ENCODE measurements at regions of chr14 and their contacts with region 1.

Region 1: GRCh38 chr14:67487937-67488893 is at the start of gene TMEM229B:
- DNase-seq: peak; percentile 80
- H3K4me3 Mint-ChIP-seq: peak within 1 kb of the TSS; percentile 82
- H3K27ac Mint-ChIP-seq: peak within 1 kb of the TSS; percentile 81
- H3K4me1 Mint-ChIP-seq: peaks cover 44% of the 10 kb centered on the region
- H3K27me3 Mint-ChIP-seq: peaks cover 13% of the 10 kb centered on the region
- total RNA-seq, gene TMEM229B: 1.7 and 1.8 TPM in 2 replicates

Region 2: GRCh38 chr14:67426983-67427606 is 61.1 kb before region 1 on chr14:
- intact Hi-C with region 1: no loop called
- DNase-seq: peak; percentile 61
- H3K4me3 Mint-ChIP-seq: no peak overlapping the region
- H3K27ac Mint-ChIP-seq: no peak overlapping the region
- H3K4me1 Mint-ChIP-seq: peaks cover 7% of the 10 kb centered on the region
- H3K27me3 Mint-ChIP-seq: peaks cover 27% of the 10 kb centered on the region

Region 3: GRCh38 chr14:67461341-67462098 is 26.7 kb before region 1 on chr14:
- intact Hi-C with region 1: loop called (anchors 2 kb)
- DNase-seq: no peak
- H3K4me3 Mint-ChIP-seq: no peak overlapping the region
- H3K27ac Mint-ChIP-seq: no peak overlapping the region
- H3K4me1 Mint-ChIP-seq: peaks cover 17% of the 10 kb centered on the region
- H3K27me3 Mint-ChIP-seq: peaks cover 25% of the 10 kb centered on the region

Region 4: DNA sequence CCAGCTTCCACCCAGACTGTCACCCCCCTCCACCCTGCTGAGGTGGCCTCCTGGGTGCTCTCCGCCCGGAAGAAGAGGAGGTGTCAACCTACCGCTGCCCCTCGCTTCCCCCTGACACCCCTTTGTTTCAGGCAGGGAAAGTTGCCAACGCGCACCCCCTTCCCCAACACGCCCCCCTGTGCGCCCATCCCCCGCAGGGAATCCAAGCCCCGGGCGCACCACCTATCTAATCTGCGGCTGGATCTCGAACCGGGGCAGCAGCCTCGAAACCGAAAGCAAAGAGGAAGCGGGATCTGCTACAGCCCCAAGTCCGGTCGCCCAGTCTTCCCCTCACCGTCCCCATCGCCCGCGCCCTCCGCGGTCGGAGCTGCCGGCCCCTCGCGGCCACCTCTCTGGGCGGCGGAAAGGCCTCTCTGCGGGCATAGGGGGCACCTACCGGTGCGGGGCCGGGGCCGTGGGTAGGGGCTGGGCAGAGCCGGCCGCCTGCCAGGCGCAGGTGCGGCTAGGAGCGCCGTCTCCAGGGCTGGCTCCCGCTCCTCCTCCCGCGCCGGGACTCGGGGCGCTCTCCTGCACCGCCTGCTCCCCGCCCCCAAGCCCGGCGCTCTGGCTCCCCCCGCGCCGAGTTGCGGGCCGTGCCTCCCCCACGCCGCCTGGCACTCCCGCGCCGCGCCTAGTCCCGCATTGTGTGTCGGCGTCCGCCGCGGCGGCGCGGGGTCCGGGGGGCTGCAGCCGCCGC is 26.6 kb after region 1 on chr14:
- intact Hi-C with region 1: loop called (anchors 1 kb)
- DNase-seq: peak; percentile 39
- H3K4me3 Mint-ChIP-seq: peak overlapping the region; percentile 82
- H3K27ac Mint-ChIP-seq: peak overlapping the region; percentile 36
- H3K4me1 Mint-ChIP-seq: peaks cover 9% of the 10 kb centered on the region
- H3K27me3 Mint-ChIP-seq: peaks cover 46% of the 10 kb centered on the region

Region 5: DNA sequence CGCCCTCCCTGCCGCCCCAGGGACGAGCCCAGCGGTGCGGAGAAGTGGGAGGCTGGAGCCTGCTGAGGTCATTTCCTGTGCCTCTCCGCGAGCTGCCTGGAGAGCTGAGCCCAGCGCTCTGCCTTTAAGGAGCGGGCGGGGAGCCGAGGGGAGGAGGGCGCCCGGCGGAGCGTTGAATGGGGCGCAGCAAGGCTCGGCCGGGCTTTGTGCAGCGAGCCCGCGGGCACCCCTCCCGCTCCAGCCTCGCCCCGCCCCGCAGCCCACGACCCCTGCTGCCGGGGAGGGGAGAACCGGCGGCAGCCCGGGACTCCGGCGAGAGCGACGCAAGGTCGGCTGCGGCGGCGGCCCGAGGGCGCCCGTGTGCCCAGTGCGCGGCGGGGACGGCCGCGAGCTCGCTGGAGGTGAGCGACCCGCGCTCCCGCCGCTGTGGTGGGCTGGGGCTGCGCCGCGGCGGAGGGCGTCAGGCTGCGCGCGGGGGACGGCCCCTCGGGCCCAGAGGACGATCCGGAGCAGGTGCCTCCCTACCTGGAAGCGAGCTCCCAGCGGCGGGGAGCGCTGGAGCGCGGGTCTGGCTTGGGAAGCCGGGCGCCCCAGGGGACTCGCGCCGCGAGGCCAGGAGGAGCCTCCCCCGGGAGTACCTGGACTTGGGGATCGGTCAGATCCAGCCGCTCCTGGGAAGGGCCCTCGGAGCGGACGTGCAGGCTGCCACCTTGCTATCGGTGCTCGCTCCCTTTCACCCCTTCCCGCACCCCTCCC is 45.0 kb after region 1 on chr14 and contains the start of gene PLEKHH1:
- intact Hi-C with region 1: loop called (anchors 1 kb)
- DNase-seq: peak; percentile 58
- H3K4me3 Mint-ChIP-seq: peak within 1 kb of the TSS; percentile 75
- H3K27ac Mint-ChIP-seq: no peak within 1 kb of the TSS
- H3K4me1 Mint-ChIP-seq: no peaks in the 10 kb centered on the region
- H3K27me3 Mint-ChIP-seq: peaks cover 51% of the 10 kb centered on the region
- total RNA-seq, gene PLEKHH1: 0.96 and 2.4 TPM in 2 replicates

Measured in activated T-helper 1 cell treated with anti-CD3 and anti-CD28 coated beads, Interleukin-12 subunit alpha, Interleukin-12 subunit beta, Interleukin-2, Interleukin-4 antibody, amounts not matched to agents 30 ng/mL and 10 ng/mL and 1 ng/mL, durations not matched to agents 14 hours and 24 hours and 36 hours (primary cell).